ENCODE measurements at regions of chr22 and their contacts with region 1.

Region 1: DNA sequence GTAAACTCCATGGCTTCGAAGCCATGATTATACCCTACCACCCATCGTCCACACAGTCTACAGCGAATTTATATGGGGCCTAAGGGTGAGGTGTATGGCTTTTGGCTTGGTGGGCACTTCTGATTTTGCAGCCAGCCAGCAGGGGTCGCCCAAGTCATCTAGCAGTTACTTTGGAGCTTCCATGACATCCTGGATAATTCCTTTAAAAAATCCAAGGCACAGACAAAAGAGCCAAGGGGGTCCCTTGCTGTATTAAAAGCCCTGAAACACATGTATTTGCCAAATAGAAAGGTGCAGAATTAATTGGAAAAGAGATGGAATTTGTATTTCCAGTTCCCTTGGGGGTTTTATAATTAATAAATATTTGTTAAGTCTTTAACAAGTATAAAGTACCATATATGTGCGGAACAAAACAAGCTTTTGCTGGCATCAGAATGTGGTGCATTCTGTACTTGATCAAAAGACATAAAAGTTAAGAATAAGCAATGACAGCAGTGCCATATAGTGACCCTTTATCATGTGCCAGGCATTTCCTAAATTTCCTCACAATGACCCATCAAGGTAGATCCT is 132.8 kb upstream of the PITPNB start:
- DNase-seq: peak; percentile 85
- ATAC-seq: peak; percentile 85

Region 2: DNA sequence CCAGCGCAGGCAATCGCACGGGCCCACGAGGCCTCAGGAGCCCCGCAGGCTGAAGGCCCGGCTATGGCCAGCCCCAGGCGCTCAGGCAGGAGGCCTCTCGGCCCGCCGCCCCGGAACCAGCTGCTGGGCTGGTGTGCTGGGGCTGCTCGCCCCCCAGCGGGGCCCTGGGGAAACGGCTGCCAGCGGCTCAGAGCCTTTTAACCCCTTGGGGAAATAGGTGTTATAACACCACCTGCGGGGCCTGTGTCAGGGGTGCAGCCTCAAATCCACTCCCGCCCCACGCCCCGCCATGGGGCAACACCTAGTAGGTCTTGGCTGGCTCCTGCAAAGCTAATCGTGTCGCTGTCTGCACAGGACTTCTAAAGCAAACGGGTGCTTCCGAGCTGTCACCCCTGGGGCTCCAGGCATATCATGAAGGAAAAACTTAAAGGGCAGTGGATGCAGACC is 390.4 kb after region 1 on chr22:
- intact Hi-C with region 1: loop called (anchors 10 kb)
- DNase-seq: peak; percentile 88
- ATAC-seq: peak; percentile 94

Region 3: GRCh38 chr22:28594797-28595462 is 543.1 kb after region 1 on chr22:
- intact Hi-C with region 1: loop called (anchors 5 kb)
- DNase-seq: no peak
- ATAC-seq: peak; percentile 96